Activated CD8-positive, alpha-beta T cell treated with anti-CD3 and anti-CD28 coated beads, Interleukin-2, amount 10 ng/mL, durations not matched to agents 7 days and 5 days (primary cell): ENCODE measurements at regions of chr19 and their contacts with region 1.

Region 1: DNA sequence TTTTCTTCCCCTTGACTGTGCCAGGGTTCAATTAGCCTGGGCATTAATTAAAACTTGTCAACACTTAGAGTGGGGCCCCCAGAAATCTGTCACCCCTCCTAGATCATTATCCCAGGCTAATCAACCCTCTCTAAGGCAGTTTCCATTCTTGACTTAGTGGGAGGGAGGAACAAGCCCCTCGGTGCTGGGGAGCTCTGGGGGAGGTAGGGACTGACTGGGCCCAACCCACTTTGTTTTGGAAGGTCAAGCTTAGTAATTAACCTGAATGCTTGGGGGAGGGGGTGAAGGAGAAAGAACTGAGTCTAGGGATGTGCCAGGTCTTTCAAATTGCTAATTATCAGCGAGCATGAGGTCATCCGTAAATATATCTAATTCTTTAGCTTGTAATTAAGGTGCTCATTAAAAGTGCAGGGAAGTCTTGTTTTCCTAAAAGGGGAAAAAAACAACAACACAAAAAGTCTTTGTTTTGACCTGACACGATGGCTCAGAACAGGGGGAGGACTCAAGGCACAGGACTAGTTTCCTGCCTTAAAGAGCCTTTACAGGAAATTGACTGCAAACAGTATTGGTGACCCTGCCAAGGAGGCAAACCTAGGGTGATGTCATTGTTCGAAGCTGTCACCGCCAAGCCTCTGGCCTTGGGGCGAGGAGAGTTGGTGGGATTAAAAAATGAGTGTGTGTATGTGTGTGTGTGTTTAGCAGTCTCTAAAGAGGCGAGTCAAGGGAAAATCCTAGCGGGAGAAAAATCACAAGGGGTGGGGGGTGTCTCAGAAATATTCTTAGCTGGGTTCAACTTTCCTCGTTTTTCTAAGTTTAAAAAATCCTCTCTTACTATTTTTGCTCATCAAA is 19.4 kb downstream of the ACTN4 start:
- DNase-seq: peak; percentile 64
- ATAC-seq: peak; percentile 72
- H3K4me3 Mint-ChIP-seq: peak overlapping the region; percentile 16
- H3K27ac Mint-ChIP-seq: peak overlapping the region; percentile 82
- H3K4me1 Mint-ChIP-seq: peaks cover 96% of the 10 kb centered on the region
- H3K27me3 Mint-ChIP-seq: no peaks in the 10 kb centered on the region

Region 2: GRCh38 chr19:38685666-38686529 is 19.0 kb after region 1 on chr19:
- CTCF ChIA-PET with region 1: interaction called, 14 read pairs
- POLR2A ChIA-PET with region 1: interaction called, 3 read pairs
- DNase-seq: peak; percentile 23
- ATAC-seq: no peak
- H3K4me3 Mint-ChIP-seq: peak overlapping the region; percentile 46
- H3K27ac Mint-ChIP-seq: peak overlapping the region; percentile 79
- H3K4me1 Mint-ChIP-seq: peaks cover 90% of the 10 kb centered on the region
- H3K27me3 Mint-ChIP-seq: no peaks in the 10 kb centered on the region